Activated CD4-positive, alpha-beta T cell treated with anti-CD3 and anti-CD28 coated beads for 36 hours (primary cell): ENCODE measurements at regions of chr18 and their contacts with region 1.

Region 1: DNA sequence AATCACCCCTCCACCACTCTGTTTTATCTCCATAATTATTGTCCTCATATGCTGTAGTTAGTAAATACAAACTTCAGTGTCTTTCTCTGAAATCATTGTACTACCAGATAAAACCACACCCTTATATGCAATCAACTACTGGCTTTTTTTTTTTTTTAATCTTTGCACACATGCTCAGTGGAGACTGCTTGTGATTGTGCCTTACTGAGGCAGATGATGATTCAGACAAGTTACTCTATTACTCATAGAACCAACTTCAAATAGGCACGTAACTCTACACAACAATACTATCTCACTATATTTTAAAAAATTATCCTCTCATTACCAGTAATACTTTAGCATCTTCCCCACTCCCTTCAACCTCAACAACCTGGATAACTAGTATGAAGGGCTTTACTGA is 1278.4 kb upstream of the PIK3C3 start:
- DNase-seq: no peak
- ATAC-seq: no peak
- H3K4me3 Mint-ChIP-seq: no peak overlapping the region
- H3K27ac Mint-ChIP-seq: no peak overlapping the region
- H3K4me1 Mint-ChIP-seq: no peaks in the 10 kb centered on the region
- H3K27me3 Mint-ChIP-seq: no peaks in the 10 kb centered on the region

Region 2: GRCh38 chr18:40577239-40577980 is 99.3 kb before region 1 on chr18:
- CTCF ChIA-PET with region 1: no interaction called
- POLR2A ChIA-PET with region 1: no interaction called
- intact Hi-C with region 1: no loop called
- DNase-seq: no peak
- ATAC-seq: no peak
- H3K4me3 Mint-ChIP-seq: no peak overlapping the region
- H3K27ac Mint-ChIP-seq: no peak overlapping the region
- H3K4me1 Mint-ChIP-seq: no peaks in the 10 kb centered on the region
- H3K27me3 Mint-ChIP-seq: no peaks in the 10 kb centered on the region

Region 3: GRCh38 chr18:40687399-40687798 is 10.7 kb after region 1 on chr18:
- CTCF ChIA-PET with region 1: no interaction called
- POLR2A ChIA-PET with region 1: no interaction called
- intact Hi-C with region 1: loop called (anchors 1 kb)
- DNase-seq: no peak
- ATAC-seq: no peak
- H3K4me3 Mint-ChIP-seq: no peak overlapping the region
- H3K27ac Mint-ChIP-seq: no peak overlapping the region
- H3K4me1 Mint-ChIP-seq: no peaks in the 10 kb centered on the region
- H3K27me3 Mint-ChIP-seq: no peaks in the 10 kb centered on the region

Region 4: DNA sequence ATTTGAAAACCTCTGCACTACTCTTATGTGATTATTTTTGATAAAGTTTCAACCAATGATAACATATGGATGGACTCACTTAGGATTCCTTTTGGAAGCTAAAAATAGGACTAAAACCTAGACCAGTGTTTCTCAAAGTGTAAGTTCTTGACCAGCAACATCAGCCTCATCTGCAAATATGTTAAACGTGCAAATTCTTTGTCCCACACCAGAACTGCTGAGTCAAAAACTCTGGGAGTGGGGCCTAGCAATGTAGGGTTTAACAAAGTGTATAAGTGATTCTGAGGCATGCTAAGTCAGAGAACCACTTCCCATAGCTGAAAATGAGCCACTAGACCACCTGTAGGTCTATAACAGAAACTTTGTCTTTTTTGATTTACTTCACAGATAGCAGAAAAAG is 31.1 kb after region 1 on chr18:
- CTCF ChIA-PET with region 1: no interaction called
- POLR2A ChIA-PET with region 1: no interaction called
- intact Hi-C with region 1: no loop called
- DNase-seq: no peak
- ATAC-seq: no peak
- H3K4me3 Mint-ChIP-seq: no peak overlapping the region
- H3K27ac Mint-ChIP-seq: no peak overlapping the region
- H3K4me1 Mint-ChIP-seq: no peaks in the 10 kb centered on the region
- H3K27me3 Mint-ChIP-seq: no peaks in the 10 kb centered on the region